Mammary epithelial cell (primary cell): ENCODE measurements at regions of chr22 and their contacts with region 1.

Region 1: GRCh38 chr22:36481393-36482168 is at the start of gene TXN2:
- DNase-seq: peak; percentile 92
- H3K4me3 ChIP-seq: peak within 1 kb of the TSS; percentile 86 to 92 (median 86)
- H3K27ac ChIP-seq: peak within 1 kb of the TSS; percentile 86
- H3K4me1 ChIP-seq: peaks cover 14% of the 10 kb centered on the region
- H3K27me3 ChIP-seq: no peaks in the 10 kb centered on the region
- CTCF ChIP-seq: no peak
- total RNA-seq, gene TXN2: 34.7 to 56.9 TPM

Region 2: DNA sequence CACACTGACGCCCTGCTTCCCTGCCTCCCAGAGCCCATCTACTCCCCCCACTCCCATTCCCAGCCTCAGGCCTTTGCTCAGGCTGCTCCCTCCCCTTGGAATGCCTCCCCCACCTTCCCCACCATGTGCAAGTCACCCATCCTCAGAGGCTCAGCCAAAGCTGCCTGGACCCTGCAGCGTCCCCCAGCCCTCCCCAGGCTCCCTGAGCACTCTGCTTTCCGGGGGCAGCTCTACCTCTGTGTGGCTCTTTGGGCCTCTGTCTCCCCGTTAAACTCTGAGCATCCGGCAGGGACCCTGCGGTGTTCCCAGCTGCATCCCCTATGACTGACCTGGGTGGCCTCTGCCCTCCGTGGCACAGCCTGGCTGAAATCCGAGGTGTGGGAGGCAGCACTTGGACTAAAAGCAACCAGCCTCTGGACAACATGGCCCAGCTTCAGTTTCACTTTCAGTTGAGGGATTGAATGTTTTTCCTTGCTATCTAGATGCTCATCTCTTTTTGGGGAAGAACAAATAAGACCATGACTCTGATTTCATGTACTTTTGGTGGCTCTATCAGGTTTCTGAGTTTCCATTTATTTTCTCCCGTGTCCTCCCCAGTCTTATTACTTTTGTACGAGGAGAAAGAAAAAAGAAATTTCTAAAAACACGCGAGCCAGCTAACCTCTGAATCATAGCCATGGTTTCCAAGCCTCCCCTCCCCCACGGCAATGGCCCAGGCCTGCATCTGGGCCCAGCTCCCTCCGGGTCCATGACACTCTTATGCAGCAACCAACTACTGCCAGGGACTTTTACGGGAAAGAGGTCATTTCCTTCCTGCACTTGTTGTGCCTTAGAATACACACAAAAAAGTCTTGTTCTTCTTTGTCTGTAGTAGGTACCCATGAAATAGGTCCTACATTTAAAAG is 324.8 kb before region 1 on chr22:
- CTCF ChIA-PET with region 1: no interaction called
- dilution Hi-C with region 1: no loop called
- in situ Hi-C with region 1: loop called in 1 of 2 experiments (anchors 25 kb)
- intact Hi-C with region 1: no loop called
- DNase-seq: peak; percentile 60
- H3K4me3 ChIP-seq: peak overlapping the region; percentile 33 to 53 (median 39)
- H3K27ac ChIP-seq: peak overlapping the region; percentile 68
- H3K4me1 ChIP-seq: peaks cover 9% of the 10 kb centered on the region
- H3K27me3 ChIP-seq: no peaks in the 10 kb centered on the region
- CTCF ChIP-seq: no peak

Region 3: GRCh38 chr22:36180038-36180880 is 301.3 kb before region 1 on chr22:
- CTCF ChIA-PET with region 1: no interaction called
- dilution Hi-C with region 1: no loop called
- in situ Hi-C with region 1: loop called in 1 of 2 experiments (anchors 25 kb)
- intact Hi-C with region 1: no loop called
- DNase-seq: peak; percentile 35
- H3K4me3 ChIP-seq: no peak overlapping the region
- H3K27ac ChIP-seq: no peak overlapping the region
- H3K4me1 ChIP-seq: no peaks in the 10 kb centered on the region
- H3K27me3 ChIP-seq: peaks cover 3% of the 10 kb centered on the region
- CTCF ChIP-seq: peak; percentile 86 to 91

Region 4: GRCh38 chr22:36239401-36240171 is 242.0 kb before region 1 on chr22 and contains the start of gene APOL2:
- CTCF ChIA-PET with region 1: no interaction called
- dilution Hi-C with region 1: no loop called
- in situ Hi-C with region 1: no loop called
- intact Hi-C with region 1: loop called (anchors 5 kb)
- DNase-seq: peak; percentile 89
- H3K4me3 ChIP-seq: peak within 1 kb of the TSS; percentile 58 to 73 (median 71)
- H3K27ac ChIP-seq: peak within 1 kb of the TSS; percentile 39
- H3K4me1 ChIP-seq: peaks cover 18% of the 10 kb centered on the region
- H3K27me3 ChIP-seq: no peaks in the 10 kb centered on the region
- CTCF ChIP-seq: peak; percentile 52 to 79
- total RNA-seq, gene APOL2: 16.8 to 24.3 TPM

Region 5: GRCh38 chr22:36350751-36351594 is 130.6 kb before region 1 on chr22:
- CTCF ChIA-PET with region 1: no interaction called
- dilution Hi-C with region 1: no loop called
- in situ Hi-C with region 1: no loop called
- intact Hi-C with region 1: no loop called
- DNase-seq: peak; percentile 72
- H3K4me3 ChIP-seq: no peak overlapping the region
- H3K27ac ChIP-seq: peak overlapping the region; percentile 75
- H3K4me1 ChIP-seq: peaks cover 80% of the 10 kb centered on the region
- H3K27me3 ChIP-seq: no peaks in the 10 kb centered on the region
- CTCF ChIP-seq: peak in 1 of 2 donors; percentile 40

Region 6: GRCh38 chr22:36374603-36375024 is 107.0 kb before region 1 on chr22:
- CTCF ChIA-PET with region 1: no interaction called
- dilution Hi-C with region 1: no loop called
- in situ Hi-C with region 1: no loop called
- intact Hi-C with region 1: no loop called
- DNase-seq: peak; percentile 97
- H3K4me3 ChIP-seq: no peak overlapping the region
- H3K27ac ChIP-seq: peak overlapping the region; percentile 60
- H3K4me1 ChIP-seq: peaks cover 90% of the 10 kb centered on the region
- H3K27me3 ChIP-seq: no peaks in the 10 kb centered on the region
- CTCF ChIP-seq: no peak

Region 7: GRCh38 chr22:36409911-36410756 is 71.4 kb before region 1 on chr22:
- CTCF ChIA-PET with region 1: no interaction called
- dilution Hi-C with region 1: no loop called
- in situ Hi-C with region 1: no loop called
- intact Hi-C with region 1: no loop called
- DNase-seq: peak; percentile 98
- H3K4me3 ChIP-seq: peak overlapping the region; percentile 55 to 81 (median 67)
- H3K27ac ChIP-seq: peak overlapping the region; percentile 73
- H3K4me1 ChIP-seq: peaks cover 24% of the 10 kb centered on the region
- H3K27me3 ChIP-seq: no peaks in the 10 kb centered on the region
- CTCF ChIP-seq: peak; percentile 8 to 10